HepG2 (cell line): ENCODE measurements at regions of chr13 and their contacts with region 1.

Region 1: DNA sequence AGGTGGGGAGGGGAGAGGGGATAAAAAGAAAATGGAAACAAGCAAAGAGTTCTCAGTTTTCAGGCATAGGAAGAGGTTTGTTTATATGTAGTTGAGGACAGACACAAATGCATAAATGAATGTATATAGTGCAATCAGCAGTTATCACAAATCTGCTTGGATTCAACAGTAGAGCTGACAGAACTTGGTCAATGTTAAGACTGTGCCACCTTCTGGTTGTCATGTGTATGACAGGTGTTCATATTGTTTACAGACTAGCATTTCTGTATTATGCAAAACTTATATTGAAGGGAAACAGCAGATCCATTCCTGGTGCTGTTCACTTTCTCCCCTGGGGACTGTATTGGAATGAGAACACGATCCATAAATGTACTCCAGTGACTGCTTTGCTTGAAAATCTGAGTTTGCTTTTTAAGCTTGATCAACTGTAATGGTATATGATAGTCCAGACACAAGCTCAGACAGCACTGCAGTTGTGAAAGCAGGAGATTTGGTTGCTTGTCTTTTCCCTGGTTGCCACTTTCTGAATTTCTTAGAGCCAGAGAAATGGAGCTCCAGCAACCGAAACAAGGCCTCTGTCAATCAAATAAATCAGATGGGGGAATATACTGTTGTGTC is 319.5 kb upstream of the OBI1 start:
- DNase-seq: peak; percentile 50
- ATAC-seq: peak; percentile 93
- H3K4me3 ChIP-seq: no peak overlapping the region
- H3K27ac ChIP-seq: no peak overlapping the region
- H3K4me1 ChIP-seq: no peaks in the 10 kb centered on the region
- H3K27me3 ChIP-seq: no peaks in the 10 kb centered on the region
- CTCF ChIP-seq: peak; percentile 79
- EP300 ChIP-seq: no peak
- POLR2A ChIP-seq: no peak
- RAD21 ChIP-seq: peak; percentile 41; the same call in 1 of the 2 replicates

Region 2: DNA sequence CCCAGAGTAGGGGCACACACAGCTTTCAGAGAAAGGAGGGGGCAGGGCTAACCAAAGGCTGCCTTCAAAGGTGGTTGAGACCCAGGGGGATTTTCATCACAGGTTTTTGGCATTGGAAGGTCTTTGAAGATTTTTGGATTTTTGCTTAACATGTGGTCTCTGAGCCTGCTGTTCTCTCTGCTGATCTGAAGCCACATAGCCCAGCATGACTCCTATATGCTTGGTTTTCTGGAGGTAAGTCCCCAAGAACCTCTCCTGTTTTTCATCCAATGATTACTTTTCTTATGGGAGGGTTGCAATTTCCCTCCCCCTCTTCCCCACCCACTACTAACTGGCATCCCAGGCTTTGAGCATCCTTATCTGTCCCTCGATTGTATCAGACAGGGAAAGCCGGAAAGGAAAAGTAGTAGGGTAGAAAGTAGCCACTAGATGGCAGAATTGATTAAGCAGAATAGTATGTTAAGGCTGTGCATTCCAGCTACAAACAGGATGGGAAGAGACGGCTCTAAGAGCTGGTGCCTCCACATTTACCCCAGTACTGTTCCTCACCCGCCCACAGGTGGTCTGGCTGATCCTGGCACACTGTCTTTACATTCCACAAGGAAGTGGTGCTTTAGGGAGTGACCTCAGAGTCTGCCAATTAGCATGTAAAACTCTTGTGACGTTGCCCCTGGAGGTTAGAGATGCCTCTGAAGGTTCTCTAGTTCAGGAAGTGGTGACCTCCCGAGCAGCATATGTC is 840.9 kb before region 1 on chr13:
- CTCF ChIA-PET with region 1: interaction called, 25 read pairs
- POLR2A ChIA-PET with region 1: no interaction called
- in situ Hi-C with region 1: loop called (anchors 5 kb)
- intact Hi-C with region 1: loop called (anchors 1 kb)
- DNase-seq: peak; percentile 58
- ATAC-seq: peak; percentile 99
- H3K4me3 ChIP-seq: no peak overlapping the region
- H3K27ac ChIP-seq: no peak overlapping the region
- H3K4me1 ChIP-seq: no peaks in the 10 kb centered on the region
- H3K27me3 ChIP-seq: no peaks in the 10 kb centered on the region
- CTCF ChIP-seq: peak; percentile 78
- EP300 ChIP-seq: no peak
- POLR2A ChIP-seq: no peak
- RAD21 ChIP-seq: peak; percentile 35; the same call in 1 of the 2 replicates

Region 3: GRCh38 chr13:78241278-78241919 is 737.1 kb before region 1 on chr13:
- CTCF ChIA-PET with region 1: interaction called, 20 read pairs
- POLR2A ChIA-PET with region 1: no interaction called
- in situ Hi-C with region 1: loop called (anchors 5 kb)
- intact Hi-C with region 1: no loop called
- DNase-seq: peak; percentile 27
- ATAC-seq: peak; percentile 83
- H3K4me3 ChIP-seq: no peak overlapping the region
- H3K27ac ChIP-seq: no peak overlapping the region
- H3K4me1 ChIP-seq: no peaks in the 10 kb centered on the region
- H3K27me3 ChIP-seq: no peaks in the 10 kb centered on the region
- CTCF ChIP-seq: peak; percentile 69
- EP300 ChIP-seq: no peak
- POLR2A ChIP-seq: no peak
- RAD21 ChIP-seq: peak; percentile 58

Region 4: DNA sequence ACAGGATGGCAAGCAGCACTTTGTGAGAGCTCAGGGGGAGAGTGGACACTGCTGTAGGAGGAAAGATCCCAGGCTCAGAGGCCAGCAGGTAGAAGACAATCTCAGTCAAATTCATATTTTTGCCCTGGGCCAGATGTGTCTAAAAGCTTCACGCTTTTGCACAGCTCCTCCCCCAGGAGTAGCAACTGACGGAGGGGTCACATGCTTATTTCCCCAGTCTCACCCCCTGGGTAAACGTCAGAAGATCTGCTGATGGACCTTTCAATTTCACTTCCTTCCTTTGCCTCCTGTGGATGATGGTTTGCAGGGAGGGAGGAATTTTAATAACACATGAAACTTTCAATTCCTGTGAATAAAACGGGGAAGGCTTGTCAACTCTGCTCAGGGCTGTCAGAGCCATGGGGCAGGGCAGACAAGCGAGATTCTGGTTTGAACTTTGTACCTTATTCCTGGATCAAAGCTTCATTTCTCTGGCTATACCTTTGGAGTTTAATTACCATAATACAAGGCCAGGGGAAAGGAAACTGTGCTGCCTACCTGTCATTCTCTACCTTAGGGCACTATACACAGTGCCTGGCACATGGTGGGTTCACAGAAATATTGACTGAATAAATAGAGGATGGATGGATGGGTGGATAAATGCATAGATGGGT is 416.1 kb before region 1 on chr13:
- CTCF ChIA-PET with region 1: no interaction called
- POLR2A ChIA-PET with region 1: no interaction called
- in situ Hi-C with region 1: no loop called
- intact Hi-C with region 1: loop called (anchors 10 kb)
- DNase-seq: no peak
- ATAC-seq: no peak
- H3K4me3 ChIP-seq: no peak overlapping the region
- H3K27ac ChIP-seq: no peak overlapping the region
- H3K4me1 ChIP-seq: no peaks in the 10 kb centered on the region
- H3K27me3 ChIP-seq: no peaks in the 10 kb centered on the region
- CTCF ChIP-seq: no peak
- EP300 ChIP-seq: no peak
- POLR2A ChIP-seq: no peak
- RAD21 ChIP-seq: no peak

Region 5: GRCh38 chr13:78806457-78806856 is 172.0 kb before region 1 on chr13:
- CTCF ChIA-PET with region 1: no interaction called
- POLR2A ChIA-PET with region 1: no interaction called
- in situ Hi-C with region 1: no loop called
- intact Hi-C with region 1: loop called (anchors 10 kb)
- DNase-seq: peak; percentile 18
- ATAC-seq: peak; percentile 77
- H3K4me3 ChIP-seq: no peak overlapping the region
- H3K27ac ChIP-seq: no peak overlapping the region
- H3K4me1 ChIP-seq: no peaks in the 10 kb centered on the region
- H3K27me3 ChIP-seq: no peaks in the 10 kb centered on the region
- CTCF ChIP-seq: peak; percentile 31
- EP300 ChIP-seq: no peak
- POLR2A ChIP-seq: no peak
- RAD21 ChIP-seq: no peak

Region 6: DNA sequence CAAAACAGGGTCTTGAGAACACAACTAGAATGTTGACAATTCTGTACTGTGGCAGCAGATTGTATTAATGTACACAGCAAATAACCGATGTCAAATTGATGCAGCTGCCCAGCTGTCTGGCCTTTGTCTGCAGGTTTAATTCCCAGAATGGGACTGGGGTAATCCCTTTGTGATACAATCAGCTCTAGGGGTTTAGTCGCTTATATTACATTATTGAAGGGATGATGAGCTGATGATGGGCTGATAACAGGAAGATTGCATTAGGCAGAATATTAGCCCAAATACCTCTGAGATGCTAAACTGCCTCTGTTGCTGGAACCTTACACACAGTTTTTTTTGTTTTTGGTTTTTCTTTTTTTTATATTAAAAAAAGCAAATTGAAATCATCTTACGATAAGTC is 162.6 kb after region 1 on chr13:
- CTCF ChIA-PET with region 1: no interaction called
- POLR2A ChIA-PET with region 1: no interaction called
- in situ Hi-C with region 1: no loop called
- intact Hi-C with region 1: no loop called
- DNase-seq: no peak
- ATAC-seq: no peak
- H3K4me3 ChIP-seq: no peak overlapping the region
- H3K27ac ChIP-seq: no peak overlapping the region
- H3K4me1 ChIP-seq: no peaks in the 10 kb centered on the region
- H3K27me3 ChIP-seq: no peaks in the 10 kb centered on the region
- CTCF ChIP-seq: no peak
- EP300 ChIP-seq: no peak
- POLR2A ChIP-seq: no peak
- RAD21 ChIP-seq: no peak